PC-9 (cell line): ENCODE measurements at regions of chr2 and their contacts with region 1.

Region 1: DNA sequence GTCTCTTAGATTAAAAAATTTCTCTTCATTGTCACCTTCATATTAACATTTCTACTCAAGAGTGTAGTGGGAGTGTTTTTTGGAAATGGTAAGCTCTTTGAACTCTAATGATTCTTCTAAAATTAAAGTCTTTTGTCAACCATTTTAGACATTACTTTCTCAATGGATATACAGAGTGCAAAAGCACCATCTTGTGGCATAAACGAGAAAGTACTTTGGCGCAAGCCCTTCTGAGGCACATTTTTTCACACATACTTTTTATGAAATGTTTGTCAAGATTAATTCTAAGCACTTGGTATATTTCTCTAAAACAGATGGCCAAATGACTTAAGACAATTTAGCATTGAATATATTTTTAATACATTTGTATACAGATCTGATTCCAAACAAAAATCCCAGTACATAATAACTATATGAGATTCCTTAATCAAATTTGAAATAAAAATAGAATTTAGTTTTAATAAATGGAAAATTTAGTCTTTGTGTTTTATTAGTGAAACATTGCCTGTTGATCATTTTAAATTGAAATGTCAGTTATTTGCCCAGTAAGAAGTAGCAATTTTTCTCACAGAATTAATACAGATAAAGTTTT is 63.3 kb upstream of the GALNT5 start:
- DNase-seq: peak in 1 of 2 experiments; percentile 3
- H3K4me3 ChIP-seq: no peak overlapping the region
- H3K27ac ChIP-seq: no peak overlapping the region
- H3K4me1 ChIP-seq: no peaks in the 10 kb centered on the region
- H3K27me3 ChIP-seq: no peaks in the 10 kb centered on the region
- CTCF ChIP-seq: peak; percentile 73

Region 2: GRCh38 chr2:155377266-155377680 is 1816.9 kb before region 1 on chr2:
- CTCF ChIA-PET with region 1: interaction called, 10 read pairs
- POLR2A ChIA-PET with region 1: no interaction called
- intact Hi-C with region 1: loop called (anchors 1 kb)
- DNase-seq: no peak
- H3K4me3 ChIP-seq: no peak overlapping the region
- H3K27ac ChIP-seq: no peak overlapping the region
- H3K4me1 ChIP-seq: no peaks in the 10 kb centered on the region
- H3K27me3 ChIP-seq: no peaks in the 10 kb centered on the region
- CTCF ChIP-seq: peak; percentile 62

Region 3: GRCh38 chr2:157257312-157258252 is 63.4 kb after region 1 on chr2 and contains the start of gene GALNT5:
- CTCF ChIA-PET with region 1: no interaction called
- POLR2A ChIA-PET with region 1: no interaction called
- intact Hi-C with region 1: no loop called
- DNase-seq: peak in 1 of 2 experiments; percentile 16
- H3K4me3 ChIP-seq: no peak within 1 kb of the TSS
- H3K27ac ChIP-seq: no peak within 1 kb of the TSS
- H3K4me1 ChIP-seq: peaks cover 15% of the 10 kb centered on the region
- H3K27me3 ChIP-seq: no peaks in the 10 kb centered on the region
- CTCF ChIP-seq: no peak
- total RNA-seq, gene GALNT5: 1.3 and 1.9 TPM in 2 replicates